A549 (cell line): ENCODE measurements at regions of chr5 and their contacts with region 1.

Region 1: GRCh38 chr5:139787568-139788293 is 7.9 kb upstream of the PSD2 start:
- DNase-seq: peak; percentile 76 to 97
- ATAC-seq: peak; percentile 65 to 90
- H3K4me3 ChIP-seq: peak overlapping the region; percentile 63
- H3K27ac ChIP-seq: peak overlapping the region; percentile 81
- H3K4me1 ChIP-seq: 0 out of 3 replicates have a peak, but pooled peaks cover 4% of the 10 kb centered on the region
- CTCF ChIP-seq: peak; percentile 87
- EP300 ChIP-seq: no peak
- POLR2A ChIP-seq: no peak
- RAD21 ChIP-seq: peak; percentile 95 to 98

Region 2: DNA sequence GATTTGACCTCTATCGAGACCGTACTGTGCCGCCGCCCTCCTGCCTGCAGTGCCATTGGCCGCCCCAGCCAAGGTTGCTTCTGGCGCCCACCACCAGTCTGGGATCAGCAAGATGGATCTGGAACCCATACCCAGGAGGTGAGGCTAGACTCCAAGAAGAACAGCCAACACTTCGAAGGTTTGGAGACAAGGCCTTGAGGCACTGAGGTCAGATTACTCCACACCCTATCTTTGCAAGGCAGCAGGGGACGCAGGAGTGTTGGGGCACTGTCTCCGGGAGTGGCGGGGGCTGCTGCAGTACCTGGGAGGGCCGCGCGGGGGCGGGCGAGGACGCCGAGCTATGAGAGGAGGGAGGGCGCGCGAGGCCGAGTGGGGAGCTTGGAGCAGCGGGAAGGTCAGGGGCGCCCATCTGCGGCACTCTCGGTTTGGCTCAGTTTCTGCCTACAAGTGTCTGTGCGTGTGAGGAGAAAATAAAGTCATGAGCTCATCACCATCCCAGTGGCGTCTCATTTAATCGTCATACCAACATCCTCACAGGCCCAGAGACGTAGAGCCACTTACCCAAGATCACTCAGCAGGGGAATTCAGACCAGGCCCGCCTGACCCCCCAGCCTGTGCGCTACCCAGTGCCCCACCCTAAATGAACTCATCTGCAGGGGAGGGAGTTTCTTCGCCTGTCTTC is 12.6 kb before region 1 on chr5:
- CTCF ChIA-PET with region 1: interaction called, 91 read pairs
- POLR2A ChIA-PET with region 1: no interaction called
- DNase-seq: peak; percentile 63 to 83
- ATAC-seq: peak; percentile 90 to 98
- H3K4me3 ChIP-seq: no peak overlapping the region
- H3K27ac ChIP-seq: no peak overlapping the region
- H3K4me1 ChIP-seq: no peaks in the 10 kb centered on the region
- CTCF ChIP-seq: peak; percentile 71
- EP300 ChIP-seq: no peak
- POLR2A ChIP-seq: no peak
- RAD21 ChIP-seq: peak; percentile 44 to 45; a peak in 3 of 5 replicates

Region 3: GRCh38 chr5:139823757-139824355 is 36.1 kb after region 1 on chr5:
- CTCF ChIA-PET with region 1: interaction called, 26 read pairs
- POLR2A ChIA-PET with region 1: no interaction called
- DNase-seq: no peak
- ATAC-seq: no peak
- H3K4me3 ChIP-seq: no peak overlapping the region
- H3K27ac ChIP-seq: no peak overlapping the region
- H3K4me1 ChIP-seq: no peaks in the 10 kb centered on the region
- CTCF ChIP-seq: no peak
- EP300 ChIP-seq: no peak
- POLR2A ChIP-seq: no peak
- RAD21 ChIP-seq: no peak

Region 4: DNA sequence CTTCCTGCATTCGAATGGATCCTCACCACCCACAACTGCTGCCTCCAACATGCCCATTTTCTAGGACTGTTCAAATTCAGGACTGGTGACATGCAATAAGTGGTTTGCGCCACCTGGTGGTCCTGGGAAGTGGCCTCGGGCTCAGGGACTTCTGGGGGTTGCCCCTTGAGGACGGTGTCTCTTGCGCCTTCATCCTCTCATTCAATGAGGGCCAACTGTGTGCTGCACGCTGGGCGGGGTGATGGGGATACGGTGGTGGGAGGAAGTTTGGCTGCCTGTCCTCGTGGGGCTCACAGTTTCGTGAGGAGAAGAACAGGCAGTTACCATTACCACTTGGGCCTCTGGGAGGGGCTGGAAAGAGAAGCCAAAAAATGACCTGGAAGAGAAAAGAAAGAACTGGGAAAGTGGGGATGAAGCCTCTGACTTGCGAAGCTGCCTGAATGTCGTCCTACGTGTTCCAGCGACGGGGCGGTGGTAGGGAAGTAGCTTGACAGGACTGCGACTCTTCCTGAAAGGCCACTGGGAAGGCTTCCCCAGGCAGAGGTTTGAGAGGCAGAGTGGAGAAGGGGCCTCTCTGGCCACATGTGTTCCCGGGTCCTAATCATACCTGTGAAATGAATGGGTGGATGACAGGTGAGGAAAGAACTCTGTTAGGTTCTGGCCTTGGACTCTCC is 56.9 kb after region 1 on chr5:
- CTCF ChIA-PET with region 1: interaction called, 193 read pairs
- POLR2A ChIA-PET with region 1: no interaction called
- DNase-seq: peak; percentile 85
- ATAC-seq: peak; percentile 67 to 89
- H3K4me3 ChIP-seq: no peak overlapping the region
- H3K27ac ChIP-seq: no peak overlapping the region
- H3K4me1 ChIP-seq: peaks cover 6% of the 10 kb centered on the region
- CTCF ChIP-seq: peak; percentile 85
- EP300 ChIP-seq: no peak
- POLR2A ChIP-seq: no peak
- RAD21 ChIP-seq: peak; percentile 70 to 81

Region 5: DNA sequence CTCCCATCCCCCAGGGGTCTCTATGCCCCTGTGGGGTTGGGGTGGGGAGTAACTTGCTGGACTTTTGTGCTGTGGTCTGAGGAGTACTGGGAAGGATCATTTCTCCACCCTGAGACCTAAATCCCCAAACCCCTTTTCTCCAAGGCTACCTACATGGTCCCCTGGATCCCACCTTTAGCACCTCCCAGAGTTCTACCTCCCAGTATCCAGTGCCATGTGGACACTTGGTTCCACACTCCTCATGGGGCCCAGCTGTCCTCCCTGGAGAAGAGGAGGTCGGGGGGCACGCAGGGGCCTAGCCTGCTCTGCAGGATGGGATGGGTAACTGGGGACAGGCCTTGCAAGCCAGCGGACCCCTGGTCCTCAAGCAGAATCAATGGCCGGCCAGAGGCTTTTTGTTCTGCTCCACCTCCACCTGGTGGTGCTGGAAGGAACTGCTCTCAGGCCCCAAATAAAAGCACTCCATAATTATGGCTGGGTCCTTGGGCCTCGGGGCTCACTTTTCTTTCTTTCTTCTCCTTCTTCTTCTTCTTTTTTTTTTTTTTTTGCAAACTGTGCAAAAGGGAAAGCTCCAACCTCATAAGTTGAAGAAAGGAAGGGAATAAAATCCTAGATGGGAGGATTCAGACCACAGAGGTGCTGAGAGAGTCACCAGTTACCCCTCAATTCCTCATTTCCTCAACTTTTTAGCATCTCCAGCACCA is 76.3 kb after region 1 on chr5:
- CTCF ChIA-PET with region 1: interaction called, 161 read pairs
- POLR2A ChIA-PET with region 1: no interaction called
- DNase-seq: peak; percentile 49 to 80
- ATAC-seq: peak; percentile 67 to 90
- H3K4me3 ChIP-seq: no peak overlapping the region
- H3K27ac ChIP-seq: no peak overlapping the region
- H3K4me1 ChIP-seq: 0 out of 3 replicates have a peak, but pooled peaks cover 3% of the 10 kb centered on the region
- CTCF ChIP-seq: peak; percentile 68
- EP300 ChIP-seq: no peak
- POLR2A ChIP-seq: no peak
- RAD21 ChIP-seq: peak; percentile 66 to 72

Region 6: DNA sequence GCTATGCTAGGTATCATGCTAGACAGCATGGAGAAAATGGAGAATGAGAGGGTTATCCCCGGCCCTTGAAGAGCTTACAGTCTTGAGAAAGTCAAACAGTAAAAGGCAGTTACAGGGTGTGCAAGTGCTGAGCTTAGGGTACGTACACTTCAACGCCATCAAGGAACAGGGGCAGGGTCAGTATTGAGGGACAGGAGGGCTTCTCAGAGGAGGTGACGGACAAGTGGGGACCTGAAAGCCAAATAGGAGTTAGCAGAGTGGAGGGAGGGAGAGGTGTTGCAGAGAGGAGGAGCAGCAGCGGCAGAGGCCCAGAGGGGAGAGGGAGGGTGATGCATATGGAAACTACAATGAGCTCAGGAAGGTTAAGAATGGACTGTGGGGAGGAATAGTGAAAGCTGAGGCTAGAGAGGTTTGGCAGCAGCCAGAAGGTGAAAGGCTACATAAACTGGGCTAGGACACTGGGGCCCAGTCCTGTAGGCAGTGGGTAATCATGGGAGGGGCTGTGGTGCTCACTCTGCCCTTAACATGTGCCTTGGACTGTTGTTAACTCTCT is 167.4 kb after region 1 on chr5:
- CTCF ChIA-PET with region 1: interaction called, 21 read pairs
- POLR2A ChIA-PET with region 1: no interaction called
- DNase-seq: no peak
- ATAC-seq: no peak
- H3K4me3 ChIP-seq: no peak overlapping the region
- H3K27ac ChIP-seq: no peak overlapping the region
- H3K4me1 ChIP-seq: no peaks in the 10 kb centered on the region
- CTCF ChIP-seq: no peak
- EP300 ChIP-seq: no peak
- POLR2A ChIP-seq: no peak
- RAD21 ChIP-seq: no peak